Activated CD8-positive, alpha-beta T cell treated with anti-CD3 and anti-CD28 coated beads, Interleukin-2, amount 10 ng/mL, durations not matched to agents 7 days and 5 days (primary cell): ENCODE measurements at regions of chr1 and their contacts with region 1.

Region 1: DNA sequence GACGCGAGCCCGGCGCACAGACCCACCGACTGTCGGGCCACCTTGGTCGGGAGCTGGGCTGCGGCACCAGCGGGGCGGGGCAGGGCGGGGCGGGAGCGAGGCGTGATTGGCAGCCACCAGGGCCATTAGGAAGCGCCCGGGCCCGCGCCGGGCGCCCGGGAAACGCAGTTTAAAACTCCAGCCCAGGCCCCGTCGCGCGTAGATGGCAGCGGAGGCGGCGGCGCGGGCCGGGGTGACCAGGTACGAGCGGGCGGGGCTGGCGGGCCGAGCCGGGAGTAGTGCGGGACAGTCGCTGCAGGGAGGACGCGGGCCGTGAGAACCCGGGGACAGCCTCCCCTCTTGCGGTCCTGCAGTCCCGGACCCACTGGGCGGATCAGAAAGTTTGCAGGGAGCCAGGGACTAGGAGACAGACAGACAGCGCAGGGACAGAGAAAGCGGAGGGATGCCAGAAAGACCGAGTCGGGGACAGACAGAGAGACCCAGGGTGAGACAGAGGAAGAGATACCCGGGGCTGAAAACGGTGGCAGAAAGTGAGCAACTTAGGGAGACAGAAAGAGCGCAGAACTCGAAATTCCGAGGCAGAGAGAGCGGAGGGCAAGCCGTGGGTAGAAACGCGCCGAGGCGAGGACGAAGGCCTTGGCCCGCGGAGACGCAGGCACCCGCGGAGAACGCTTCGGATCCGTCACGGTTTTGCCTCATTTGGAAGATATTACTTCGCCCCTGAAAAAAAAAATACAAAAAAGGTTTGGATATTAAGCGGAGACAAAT is at the start of gene DMBX1:
- DNase-seq: peak; percentile 57
- ATAC-seq: peak; percentile 65
- H3K4me3 Mint-ChIP-seq: peak within 1 kb of the TSS; percentile 63
- H3K27ac Mint-ChIP-seq: no peak within 1 kb of the TSS
- H3K4me1 Mint-ChIP-seq: peaks cover 15% of the 10 kb centered on the region
- H3K27me3 Mint-ChIP-seq: peaks cover 86% of the 10 kb centered on the region
- total RNA-seq, gene DMBX1: 0.08 TPM in 1 of 2 experiments, not detected in the other

Region 2: GRCh38 chr1:46477153-46477929 is 12.5 kb before region 1 on chr1:
- CTCF ChIA-PET with region 1: interaction called, 10 read pairs
- POLR2A ChIA-PET with region 1: no interaction called
- DNase-seq: peak; percentile 82
- ATAC-seq: peak; percentile 73
- H3K4me3 Mint-ChIP-seq: no peak overlapping the region
- H3K27ac Mint-ChIP-seq: no peak overlapping the region
- H3K4me1 Mint-ChIP-seq: no peaks in the 10 kb centered on the region
- H3K27me3 Mint-ChIP-seq: peaks cover 36% of the 10 kb centered on the region